ENCODE measurements at regions of chr5 and their contacts with region 1.

Region 1: GRCh38 chr5:126017096-126017495 is 406.1 kb upstream of the GRAMD2B start:
- DNase-seq: no peak
- ATAC-seq: no peak
- H3K4me3 ChIP-seq: no peak overlapping the region
- H3K27ac ChIP-seq: no peak overlapping the region
- H3K4me1 ChIP-seq: peaks cover 0 to 25% (median 10%) of the 10 kb centered on the region in 12 donors
- H3K27me3 ChIP-seq: no peaks in the 10 kb centered on the region
- CTCF ChIP-seq: no peak
- POLR2A ChIP-seq: no peak

Region 2: DNA sequence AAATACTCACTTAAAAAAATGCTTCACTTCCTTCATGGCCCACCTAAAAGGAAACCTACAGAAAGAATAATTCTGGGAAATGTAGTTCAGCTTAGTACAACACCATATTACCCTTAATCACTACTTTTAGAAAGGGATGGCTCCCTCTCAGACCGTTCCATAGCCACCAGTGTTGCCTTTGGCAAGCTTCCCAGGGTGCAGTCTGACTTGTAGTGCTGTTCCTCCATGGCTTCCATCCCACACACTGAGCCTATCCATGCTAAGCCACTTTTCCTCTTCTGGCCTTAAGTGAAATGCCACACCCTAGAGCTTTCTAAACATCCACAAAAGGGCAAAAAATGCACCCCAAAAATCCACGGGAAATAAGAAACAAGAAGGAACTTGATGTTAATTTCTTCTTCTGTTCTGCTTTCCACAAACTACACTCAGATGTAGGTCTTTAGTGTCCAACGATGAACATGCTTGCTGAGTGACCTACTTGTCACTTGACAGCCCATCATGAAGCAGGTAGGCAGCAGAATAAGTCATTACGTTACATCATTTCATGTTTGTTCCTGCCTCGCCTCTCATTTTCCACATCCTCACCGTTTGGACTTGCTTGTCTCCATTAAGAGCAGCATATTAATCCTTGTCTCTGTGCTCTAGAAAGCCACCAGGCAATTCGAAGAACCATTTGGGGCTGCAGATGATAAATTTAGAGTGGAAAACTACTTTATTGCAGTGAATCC is 15.1 kb after region 1 on chr5:
- intact Hi-C with region 1: loop called in 1 of 10 experiments (anchors 1 kb)
- DNase-seq: peak; percentile 73 to 86 (median 80)
- ATAC-seq: peak; percentile 93 to 97 (median 95)
- H3K4me3 ChIP-seq: no peak overlapping the region
- H3K27ac ChIP-seq: no peak overlapping the region
- H3K4me1 ChIP-seq: peaks cover 0 to 9% (median 0%) of the 10 kb centered on the region in 12 donors
- H3K27me3 ChIP-seq: no peaks in the 10 kb centered on the region
- CTCF ChIP-seq: no peak
- POLR2A ChIP-seq: no peak